ENCODE measurements at regions of chr13 and their contacts with region 1.

Region 1: DNA sequence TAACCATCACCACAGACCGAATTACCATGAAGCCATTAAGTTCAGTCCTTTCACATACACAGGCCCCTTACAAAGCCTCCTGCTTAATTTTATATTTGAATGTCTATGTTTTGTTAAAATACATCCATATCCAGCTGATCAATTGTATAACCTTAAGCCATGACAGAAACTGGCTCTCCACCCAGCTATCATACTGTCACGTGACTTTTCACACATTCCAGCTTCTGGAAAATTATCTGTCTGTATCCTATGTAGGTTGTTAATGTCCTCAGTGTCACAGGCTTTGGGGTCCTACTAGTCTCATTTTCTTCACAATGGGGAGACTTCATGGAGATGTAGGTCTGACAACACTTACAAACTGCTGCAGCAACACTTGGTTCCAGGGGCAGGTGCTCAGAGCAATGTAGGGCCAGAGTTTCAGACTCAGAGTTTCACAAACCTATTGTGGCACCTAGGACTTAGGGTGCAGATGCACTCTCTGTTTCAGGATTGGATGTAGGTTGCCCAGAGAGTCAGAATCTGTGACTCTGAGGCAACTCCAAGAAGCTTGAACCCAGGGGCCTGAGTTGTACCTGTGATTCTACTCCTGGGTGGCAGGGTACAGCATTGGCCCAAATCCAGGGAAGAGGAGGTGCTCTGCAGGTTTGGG is 69.6 kb upstream of the PCDH20 start:
- DNase-seq: no peak
- ATAC-seq: no peak
- H3K4me3 ChIP-seq: no peak overlapping the region
- H3K27ac ChIP-seq: no peak overlapping the region
- H3K4me1 ChIP-seq: no peaks in the 10 kb centered on the region
- H3K27me3 ChIP-seq: no peaks in the 10 kb centered on the region
- CTCF ChIP-seq: no peak

Region 2: DNA sequence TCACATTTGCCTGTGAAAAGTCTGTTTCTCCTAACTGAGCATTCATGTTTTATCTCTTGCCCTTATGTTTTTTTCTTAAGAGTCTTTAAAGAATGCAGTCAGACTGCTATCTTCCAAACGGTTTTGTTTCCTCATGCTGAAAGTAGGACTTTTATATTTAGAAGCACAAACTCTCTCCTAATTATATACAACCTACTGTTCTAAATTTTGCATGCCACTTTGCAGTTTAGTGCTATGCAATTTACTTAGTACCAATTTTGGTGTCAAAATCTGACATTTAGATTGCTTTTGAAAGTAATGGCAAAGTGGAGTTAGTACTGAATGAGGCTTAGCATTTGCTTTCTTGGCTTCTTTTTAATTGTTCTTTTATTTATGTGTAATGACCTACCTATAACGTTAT is 14.5 kb before region 1 on chr13:
- intact Hi-C with region 1: loop called in 1 of 2 experiments (anchors 1 kb)
- DNase-seq: no peak
- ATAC-seq: no peak
- H3K4me3 ChIP-seq: no peak overlapping the region
- H3K27ac ChIP-seq: no peak overlapping the region
- H3K4me1 ChIP-seq: no peaks in the 10 kb centered on the region
- H3K27me3 ChIP-seq: no peaks in the 10 kb centered on the region
- CTCF ChIP-seq: no peak

Measured in psoas muscle (tissue), 8 donors.